MCF 10A (cell line): ENCODE measurements at regions of chr11 and their contacts with region 1.

Region 1: GRCh38 chr11:36746886-36747710 is 149.1 kb upstream of the RAG2 start:
- DNase-seq: peak; percentile 92
- H3K4me3 Mint-ChIP-seq: no peak overlapping the region
- H3K27ac Mint-ChIP-seq: no peak overlapping the region
- H3K4me1 Mint-ChIP-seq: peaks cover 10% of the 10 kb centered on the region
- H3K27me3 Mint-ChIP-seq: peaks cover 38% of the 10 kb centered on the region
- CTCF ChIP-seq: peak; percentile 90

Region 2: GRCh38 chr11:36316049-36316772 is 430.9 kb before region 1 on chr11:
- CTCF ChIA-PET with region 1: no interaction called
- POLR2A ChIA-PET with region 1: no interaction called
- intact Hi-C with region 1: no loop called
- DNase-seq: no peak
- H3K4me3 Mint-ChIP-seq: no peak overlapping the region
- H3K27ac Mint-ChIP-seq: no peak overlapping the region
- H3K4me1 Mint-ChIP-seq: peaks cover 20% of the 10 kb centered on the region
- H3K27me3 Mint-ChIP-seq: no peaks in the 10 kb centered on the region
- CTCF ChIP-seq: no peak

Region 3: DNA sequence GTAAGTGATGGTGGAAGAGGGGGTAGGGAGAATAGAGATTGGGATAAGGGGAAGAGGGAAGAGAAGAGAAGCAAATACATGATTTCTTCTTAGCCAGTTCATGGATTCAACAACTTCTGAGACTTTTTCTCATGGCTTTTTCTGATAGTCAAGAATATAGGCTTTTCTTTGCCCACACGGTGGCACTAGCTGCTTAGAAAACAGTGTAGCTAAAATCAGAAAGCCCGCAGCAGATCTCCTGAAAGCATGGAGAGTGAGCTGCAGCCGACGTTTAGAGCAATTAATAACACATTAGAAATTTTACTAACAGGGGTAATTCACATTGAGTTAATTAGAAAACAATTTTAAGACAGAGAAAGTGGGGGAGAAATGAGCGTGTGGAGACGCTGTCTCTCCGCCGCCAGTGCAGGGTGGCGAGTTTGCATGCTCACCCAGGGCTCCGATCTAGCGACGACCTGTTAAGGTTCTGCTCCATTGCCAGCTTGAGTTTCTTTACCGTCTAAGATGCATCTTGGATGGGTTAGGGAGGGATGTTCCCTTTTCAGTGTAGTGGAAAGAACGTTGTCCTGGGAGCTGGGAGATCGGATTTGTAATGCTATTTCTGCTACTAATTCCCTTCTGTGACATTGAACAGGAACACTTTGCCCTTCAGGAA is 182.6 kb before region 1 on chr11:
- CTCF ChIA-PET with region 1: interaction called, 173 read pairs
- POLR2A ChIA-PET with region 1: interaction called, 3 read pairs
- intact Hi-C with region 1: loop called (anchors 1 kb)
- DNase-seq: peak; percentile 71
- H3K4me3 Mint-ChIP-seq: peak overlapping the region; percentile 71
- H3K27ac Mint-ChIP-seq: peak overlapping the region; percentile 8
- H3K4me1 Mint-ChIP-seq: no peaks in the 10 kb centered on the region
- H3K27me3 Mint-ChIP-seq: peaks cover 44% of the 10 kb centered on the region
- CTCF ChIP-seq: peak; percentile 61

Region 4: GRCh38 chr11:36693139-36693843 is 53.8 kb before region 1 on chr11:
- CTCF ChIA-PET with region 1: interaction called, 21 read pairs
- POLR2A ChIA-PET with region 1: no interaction called
- intact Hi-C with region 1: no loop called
- DNase-seq: no peak
- H3K4me3 Mint-ChIP-seq: no peak overlapping the region
- H3K27ac Mint-ChIP-seq: no peak overlapping the region
- H3K4me1 Mint-ChIP-seq: no peaks in the 10 kb centered on the region
- H3K27me3 Mint-ChIP-seq: no peaks in the 10 kb centered on the region
- CTCF ChIP-seq: no peak

Region 5: GRCh38 chr11:36711106-36711825 is 35.8 kb before region 1 on chr11:
- CTCF ChIA-PET with region 1: interaction called, 57 read pairs
- POLR2A ChIA-PET with region 1: no interaction called
- intact Hi-C with region 1: no loop called
- DNase-seq: peak; percentile 18
- H3K4me3 Mint-ChIP-seq: no peak overlapping the region
- H3K27ac Mint-ChIP-seq: no peak overlapping the region
- H3K4me1 Mint-ChIP-seq: no peaks in the 10 kb centered on the region
- H3K27me3 Mint-ChIP-seq: peaks cover 36% of the 10 kb centered on the region
- CTCF ChIP-seq: no peak

Region 6: DNA sequence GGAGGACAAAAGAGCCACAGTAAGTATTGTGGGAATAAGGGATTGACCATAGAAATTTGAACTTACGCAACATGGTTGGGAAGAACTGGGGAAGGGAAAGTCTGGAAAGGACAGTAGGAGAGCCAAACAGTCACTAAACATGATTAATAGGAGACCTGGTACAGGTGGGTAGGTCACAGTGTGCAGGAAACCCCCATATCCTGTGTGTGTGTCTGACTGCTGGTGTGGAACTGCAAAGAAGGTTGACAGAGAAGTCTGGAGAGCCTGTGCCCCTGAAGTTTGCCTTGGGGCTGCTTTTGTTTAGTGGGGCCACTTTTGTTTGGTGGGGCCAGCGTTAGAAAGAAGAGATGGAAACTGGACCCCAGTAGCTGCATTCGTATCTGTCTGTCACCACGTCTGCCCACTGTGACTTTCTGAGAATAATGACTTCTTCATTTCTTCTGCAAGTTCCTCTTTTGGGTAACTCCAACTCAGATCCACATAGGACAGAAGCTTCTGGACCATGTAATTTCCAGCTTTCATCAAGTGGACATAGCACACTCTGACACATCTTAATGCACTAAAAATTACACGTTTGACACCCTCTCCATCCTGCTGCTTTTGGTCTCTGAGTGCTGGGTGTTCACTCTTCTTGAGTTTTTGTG is 22.2 kb before region 1 on chr11:
- CTCF ChIA-PET with region 1: interaction called, 173 read pairs
- POLR2A ChIA-PET with region 1: no interaction called
- intact Hi-C with region 1: no loop called
- DNase-seq: no peak
- H3K4me3 Mint-ChIP-seq: no peak overlapping the region
- H3K27ac Mint-ChIP-seq: no peak overlapping the region
- H3K4me1 Mint-ChIP-seq: no peaks in the 10 kb centered on the region
- H3K27me3 Mint-ChIP-seq: peaks cover 23% of the 10 kb centered on the region
- CTCF ChIP-seq: no peak

Region 7: GRCh38 chr11:36774603-36775002 is 27.5 kb after region 1 on chr11:
- CTCF ChIA-PET with region 1: interaction called, 21 read pairs
- POLR2A ChIA-PET with region 1: interaction called, 3 read pairs
- intact Hi-C with region 1: no loop called
- DNase-seq: peak; percentile 83
- H3K4me3 Mint-ChIP-seq: no peak overlapping the region
- H3K27ac Mint-ChIP-seq: peak overlapping the region; percentile 52
- H3K4me1 Mint-ChIP-seq: peaks cover 17% of the 10 kb centered on the region
- H3K27me3 Mint-ChIP-seq: no peaks in the 10 kb centered on the region
- CTCF ChIP-seq: no peak

Region 8: GRCh38 chr11:36807871-36808270 is 60.8 kb after region 1 on chr11:
- CTCF ChIA-PET with region 1: interaction called, 15 read pairs
- POLR2A ChIA-PET with region 1: no interaction called
- intact Hi-C with region 1: no loop called
- DNase-seq: no peak
- H3K4me3 Mint-ChIP-seq: no peak overlapping the region
- H3K27ac Mint-ChIP-seq: no peak overlapping the region
- H3K4me1 Mint-ChIP-seq: no peaks in the 10 kb centered on the region
- H3K27me3 Mint-ChIP-seq: no peaks in the 10 kb centered on the region
- CTCF ChIP-seq: no peak